ENCODE measurements at regions of chr5 and their contacts with region 1.

Region 1: GRCh38 chr5:168987543-168988300 is 313.2 kb downstream of the SLIT3 start:
- DNase-seq: peak; percentile 75
- H3K4me3 ChIP-seq: no peak overlapping the region
- H3K27ac ChIP-seq: no peak overlapping the region
- H3K4me1 ChIP-seq: peaks cover 0 to 4% (median 0%) of the 10 kb centered on the region in 4 donors
- H3K27me3 ChIP-seq: peaks cover 11% of the 10 kb centered on the region
- CTCF ChIP-seq: peak; percentile 82 to 91 (median 87)
- EP300 ChIP-seq: no peak
- POLR2A ChIP-seq: no peak

Region 2: GRCh38 chr5:168528521-168529372 is 459.0 kb before region 1 on chr5 and contains the start of gene FBLL1:
- in situ Hi-C with region 1: no loop called
- intact Hi-C with region 1: no loop called
- DNase-seq: no peak
- H3K4me3 ChIP-seq: peak within 1 kb of the TSS in 2 of 4 donors; percentile 32 to 57
- H3K27ac ChIP-seq: no peak within 1 kb of the TSS
- H3K4me1 ChIP-seq: peaks cover 0 to 5% (median 2%) of the 10 kb centered on the region in 4 donors
- H3K27me3 ChIP-seq: peaks cover 55% of the 10 kb centered on the region
- CTCF ChIP-seq: no peak
- EP300 ChIP-seq: no peak
- POLR2A ChIP-seq: no peak
- total RNA-seq, gene FBLL1: 0.96 TPM in 1 of 4 donors, not detected in the others

Region 3: DNA sequence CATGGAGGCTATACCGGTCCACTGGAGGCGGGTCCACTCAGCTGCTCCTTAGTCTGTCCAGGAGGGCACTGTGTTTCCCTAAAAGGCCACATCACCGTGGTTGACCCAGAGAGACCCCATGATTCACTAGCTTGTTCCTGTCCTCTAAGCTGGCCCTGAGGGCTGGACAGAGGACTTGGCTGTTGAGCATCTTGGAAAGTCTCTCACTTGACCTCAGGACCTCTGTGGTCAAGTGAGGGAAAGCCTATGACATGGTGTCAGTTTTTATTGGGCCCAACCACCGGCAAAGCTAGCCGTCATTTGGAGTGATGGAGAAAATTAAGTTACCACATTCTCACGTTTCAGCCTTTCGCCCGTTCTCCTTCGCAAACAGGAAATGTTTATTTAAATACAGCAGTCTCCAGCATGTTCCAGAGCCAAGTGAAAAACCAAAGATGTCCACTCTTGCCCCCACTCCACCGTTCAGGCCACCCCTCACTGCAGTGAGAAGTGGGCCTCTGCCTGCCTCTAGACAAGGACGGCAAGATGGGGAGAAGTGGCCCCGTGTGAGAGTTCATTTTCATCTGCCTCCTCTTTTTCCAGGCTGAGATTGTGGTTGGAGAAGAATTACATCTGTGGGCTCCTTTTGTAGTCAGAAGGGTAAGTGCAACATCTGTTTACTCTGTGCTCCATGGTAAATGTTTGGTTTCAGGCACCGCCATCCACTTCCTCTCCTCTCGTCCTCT is 308.9 kb after region 1 on chr5:
- in situ Hi-C with region 1: loop called (anchors 10 to 25 kb)
- intact Hi-C with region 1: no loop called
- DNase-seq: peak; percentile 12
- H3K4me3 ChIP-seq: no peak overlapping the region
- H3K27ac ChIP-seq: peak overlapping the region; percentile 21 to 64 (median 47)
- H3K4me1 ChIP-seq: peaks cover 0 to 10% (median 3%) of the 10 kb centered on the region in 4 donors
- H3K27me3 ChIP-seq: peaks cover 28% of the 10 kb centered on the region
- CTCF ChIP-seq: no peak
- EP300 ChIP-seq: no peak
- POLR2A ChIP-seq: no peak

Region 4: DNA sequence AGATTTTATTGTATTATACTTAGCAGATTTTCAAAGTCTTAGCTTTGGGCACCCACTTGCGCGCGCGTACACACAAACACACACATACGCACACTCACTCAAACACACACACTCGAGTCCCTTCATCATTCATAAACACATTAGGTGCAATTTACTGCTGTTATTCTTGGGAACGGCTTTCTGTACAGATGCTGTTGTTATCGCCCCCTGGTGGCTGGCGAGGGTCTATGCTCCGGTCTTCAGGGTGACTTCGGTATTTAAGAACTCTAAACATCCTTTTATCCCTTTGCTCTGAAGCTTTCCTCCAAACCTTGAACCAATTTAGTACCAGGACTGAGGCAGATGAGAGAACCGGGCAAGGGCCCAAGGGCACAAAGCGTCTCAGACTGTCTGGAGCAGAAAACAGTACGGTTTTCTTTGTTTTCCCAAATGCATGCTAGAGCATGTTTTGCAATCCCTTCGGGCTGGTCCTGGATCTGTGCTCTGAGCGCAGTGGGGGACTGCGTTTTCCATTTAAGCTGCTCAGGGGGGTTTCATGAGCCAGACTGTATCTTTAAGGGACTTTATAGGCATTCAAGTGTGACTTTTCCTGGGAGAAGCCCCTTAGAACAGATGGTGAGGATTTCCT is 314.9 kb after region 1 on chr5:
- in situ Hi-C with region 1: loop called (anchors 10 to 25 kb)
- intact Hi-C with region 1: loop called (anchors 2 kb)
- DNase-seq: peak; percentile 71
- H3K4me3 ChIP-seq: no peak overlapping the region
- H3K27ac ChIP-seq: peak overlapping the region in 1 of 4 donors; percentile 79
- H3K4me1 ChIP-seq: peaks cover 0 to 15% (median 5%) of the 10 kb centered on the region in 4 donors
- H3K27me3 ChIP-seq: peaks cover 54% of the 10 kb centered on the region
- CTCF ChIP-seq: peak; percentile 78 to 91 (median 87)
- EP300 ChIP-seq: no peak
- POLR2A ChIP-seq: no peak

Region 5: DNA sequence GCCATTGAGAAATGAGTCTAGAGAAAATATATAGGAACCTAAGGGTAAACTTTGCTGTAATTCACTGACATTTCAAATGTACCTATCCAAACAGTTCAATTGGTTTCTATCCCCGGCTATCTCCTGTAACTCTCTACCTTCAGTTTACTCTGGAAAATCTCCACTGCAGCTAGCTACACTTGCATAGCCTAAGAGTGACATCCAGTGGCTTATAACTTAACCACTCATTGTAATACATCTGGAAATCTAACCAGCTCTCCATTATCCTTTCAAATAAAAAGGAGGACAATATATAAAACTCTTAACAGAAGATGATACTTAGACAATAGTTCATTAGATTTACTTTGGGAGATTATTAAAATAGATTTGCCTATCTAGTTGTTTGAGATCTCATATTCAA is 560.6 kb after region 1 on chr5:
- in situ Hi-C with region 1: loop called in 3 of 4 experiments (anchors 10 to 25 kb)
- intact Hi-C with region 1: loop called (anchors 10 kb)
- DNase-seq: no peak
- H3K4me3 ChIP-seq: no peak overlapping the region
- H3K27ac ChIP-seq: no peak overlapping the region
- H3K4me1 ChIP-seq: no peaks in the 10 kb centered on the region
- H3K27me3 ChIP-seq: peaks cover 5% of the 10 kb centered on the region
- CTCF ChIP-seq: peak in 3 of 5 experiments; percentile 15 to 20 (median 16)
- EP300 ChIP-seq: no peak
- POLR2A ChIP-seq: no peak

Region 6: DNA sequence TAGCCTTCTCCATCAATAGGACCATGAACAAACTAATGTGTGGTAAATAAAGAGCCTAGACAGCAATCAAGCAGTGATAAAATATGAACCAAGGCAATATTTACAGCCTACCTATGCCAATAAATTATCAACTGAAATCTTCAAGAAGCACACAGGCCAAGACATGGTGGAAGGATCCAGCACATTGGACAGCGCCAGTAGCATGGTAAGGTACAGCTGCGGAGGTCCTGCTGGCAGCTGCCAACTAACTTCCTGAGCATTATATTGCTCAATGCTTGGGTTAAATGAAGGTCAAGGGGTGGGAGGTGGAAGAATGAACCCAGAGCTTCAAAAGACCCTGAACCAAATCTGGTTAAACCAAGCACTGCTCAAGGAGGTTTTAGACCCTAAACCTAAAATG is 579.4 kb after region 1 on chr5:
- in situ Hi-C with region 1: loop called in 3 of 4 experiments (anchors 10 to 25 kb)
- intact Hi-C with region 1: no loop called
- DNase-seq: no peak
- H3K4me3 ChIP-seq: no peak overlapping the region
- H3K27ac ChIP-seq: no peak overlapping the region
- H3K4me1 ChIP-seq: no peaks in the 10 kb centered on the region
- H3K27me3 ChIP-seq: peaks cover 15% of the 10 kb centered on the region
- CTCF ChIP-seq: no peak
- EP300 ChIP-seq: no peak
- POLR2A ChIP-seq: no peak

Measured in transverse colon (tissue), 4 donors.